ENCODE measurements at regions of chr18 and their contacts with region 1.

Region 1: DNA sequence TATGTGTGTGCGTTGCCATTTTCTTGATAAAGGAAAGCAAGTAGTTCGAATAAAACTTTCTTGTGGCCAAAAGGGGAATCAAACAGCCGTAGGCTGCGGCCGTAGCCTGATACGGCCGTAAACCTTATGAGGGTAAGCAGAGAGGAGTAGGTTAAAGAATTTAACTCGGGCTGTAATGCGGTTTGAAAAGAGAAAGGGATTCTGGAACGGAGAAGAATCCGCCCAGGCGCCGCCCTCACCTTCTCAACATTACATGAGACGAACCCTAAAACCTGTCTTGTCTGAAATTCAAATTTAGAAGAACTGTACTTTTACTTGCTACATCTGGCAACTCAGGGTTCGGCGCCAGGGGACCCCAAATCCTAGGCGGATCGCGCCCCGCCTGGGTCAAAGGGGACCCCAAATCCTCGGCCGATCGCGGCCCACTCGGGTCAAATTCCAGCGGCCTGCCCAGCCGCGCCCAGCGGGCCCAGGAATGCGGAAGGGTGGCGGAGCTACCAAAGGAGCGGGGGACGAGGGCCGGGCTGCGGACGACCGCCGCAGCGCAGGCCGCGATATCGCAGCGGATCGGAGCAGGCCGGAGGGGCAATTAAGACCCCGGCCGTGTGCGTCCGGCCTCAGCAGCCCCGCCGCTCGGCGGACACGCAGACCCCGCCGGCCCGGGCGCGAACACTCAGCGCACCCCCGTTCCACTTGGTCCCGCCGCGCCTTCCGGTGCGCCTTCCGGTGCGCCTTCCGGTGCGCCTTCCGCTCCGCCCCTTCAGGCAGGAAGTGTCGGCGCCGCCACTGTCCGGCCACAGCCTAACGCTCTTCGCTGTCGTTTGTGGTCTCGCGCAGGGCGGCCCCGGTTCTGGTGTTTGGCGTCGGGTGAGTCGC is at the start of gene MYL12B:
- DNase-seq: peak; percentile 73 to 84 (median 81)
- H3K4me3 ChIP-seq: peak within 1 kb of the TSS; percentile 73 to 95 (median 85)
- H3K27ac ChIP-seq: peak within 1 kb of the TSS; percentile 82 to 98 (median 98)
- H3K4me1 ChIP-seq: peaks cover 44 to 55% of the 10 kb centered on the region in 2 donors
- H3K27me3 ChIP-seq: no peaks in the 10 kb centered on the region
- CTCF ChIP-seq: peak in 3 of 6 experiments; percentile 8 to 25 (median 23)
- POLR2A ChIP-seq: peak; percentile 74 to 80
- total RNA-seq, gene MYL12B: 259 to 762 (median 384) TPM

Region 2: GRCh38 chr18:3321133-3321812 is 59.7 kb after region 1 on chr18:
- intact Hi-C with region 1: loop called in 1 of 2 experiments (anchors 10 kb)
- DNase-seq: peak; percentile 64 to 88 (median 79)
- H3K4me3 ChIP-seq: no peak overlapping the region
- H3K27ac ChIP-seq: no peak overlapping the region
- H3K4me1 ChIP-seq: no peaks in the 10 kb centered on the region
- H3K27me3 ChIP-seq: no peaks in the 10 kb centered on the region
- CTCF ChIP-seq: no peak
- POLR2A ChIP-seq: no peak